MCF 10A (cell line): ENCODE measurements at regions of chr20 and their contacts with region 1.

Region 1: DNA sequence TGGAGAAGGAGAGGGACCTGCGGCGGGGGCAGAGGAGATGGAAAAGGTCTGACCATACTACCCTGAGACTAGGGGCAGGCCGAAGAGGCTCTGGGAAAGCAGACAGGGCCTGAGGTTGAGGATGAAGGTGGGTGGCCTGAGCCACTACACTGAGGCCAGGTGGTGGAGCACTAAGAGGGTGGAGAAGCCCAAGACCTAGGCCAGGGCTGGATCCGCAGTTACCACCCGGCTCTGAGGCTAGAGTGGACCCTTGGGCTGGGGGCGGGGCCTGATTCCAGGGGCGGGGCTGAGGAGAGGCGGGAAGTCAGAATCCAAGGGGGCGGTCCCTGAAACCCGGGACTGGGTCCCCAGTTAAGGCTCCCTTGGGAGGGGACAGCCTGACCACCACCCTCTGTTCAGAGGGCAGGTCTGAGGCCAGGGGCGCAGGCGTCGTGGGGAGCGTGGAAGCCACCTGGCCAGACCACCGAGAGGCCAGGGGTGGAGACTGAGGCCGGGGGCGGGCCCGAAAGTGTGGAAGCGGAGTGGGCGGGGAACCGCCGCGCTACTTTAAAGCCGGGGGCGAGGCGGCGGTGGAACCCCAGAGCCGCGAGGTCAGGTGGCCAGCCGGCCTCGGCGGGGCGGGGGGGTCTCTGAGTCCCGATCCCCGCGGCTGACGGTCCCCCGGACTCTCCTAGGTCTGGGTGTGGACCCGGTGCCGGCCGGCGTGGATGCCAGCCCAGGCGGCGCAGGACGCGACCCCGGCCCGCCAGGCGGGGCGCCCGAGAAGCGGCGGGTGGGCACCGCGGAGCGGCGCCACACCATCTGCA is 8.2 kb downstream of the CCM2L start:
- DNase-seq: peak; percentile 34
- H3K4me3 Mint-ChIP-seq: peak overlapping the region; percentile 75
- H3K27ac Mint-ChIP-seq: no peak overlapping the region
- H3K4me1 Mint-ChIP-seq: no peaks in the 10 kb centered on the region
- H3K27me3 Mint-ChIP-seq: peaks cover 91% of the 10 kb centered on the region
- CTCF ChIP-seq: no peak

Region 2: DNA sequence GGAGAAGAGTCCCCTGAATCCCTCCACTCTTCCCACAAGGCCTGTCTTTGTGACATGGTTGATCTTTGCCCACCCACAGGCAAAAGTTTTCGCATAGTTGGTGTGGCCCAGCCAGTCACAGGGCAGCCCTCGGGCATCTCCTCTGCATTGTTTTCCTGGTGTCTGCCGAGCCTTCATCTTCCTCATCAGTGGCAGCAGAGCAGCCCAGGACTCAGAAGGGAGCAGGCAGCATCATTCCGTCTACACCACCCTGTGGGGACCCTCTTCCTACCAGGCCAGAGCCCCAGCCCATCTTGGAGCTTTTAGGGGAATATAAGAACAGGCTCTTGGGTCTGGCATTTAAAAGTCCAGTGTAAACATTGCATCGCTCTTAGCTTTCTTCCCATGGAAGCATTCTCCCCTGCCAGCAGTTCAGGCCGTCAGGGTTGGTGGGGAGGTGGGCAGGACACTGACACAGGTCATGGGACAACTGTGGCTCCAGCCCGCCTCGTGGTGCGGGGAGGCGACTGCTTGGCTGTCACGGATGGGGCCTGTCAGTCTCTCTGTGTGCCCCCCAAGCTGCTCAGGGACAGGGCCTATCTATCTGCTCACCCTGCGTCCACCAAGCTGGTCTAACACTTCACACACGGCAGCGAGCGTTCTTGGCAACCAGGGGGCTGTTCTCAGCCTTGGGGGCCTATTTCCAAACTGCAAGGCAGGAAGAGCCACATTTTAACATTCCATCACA is 104.9 kb before region 1 on chr20:
- CTCF ChIA-PET with region 1: no interaction called
- POLR2A ChIA-PET with region 1: no interaction called
- intact Hi-C with region 1: no loop called
- DNase-seq: no peak
- H3K4me3 Mint-ChIP-seq: no peak overlapping the region
- H3K27ac Mint-ChIP-seq: no peak overlapping the region
- H3K4me1 Mint-ChIP-seq: no peaks in the 10 kb centered on the region
- H3K27me3 Mint-ChIP-seq: peaks cover 22% of the 10 kb centered on the region
- CTCF ChIP-seq: no peak

Region 3: DNA sequence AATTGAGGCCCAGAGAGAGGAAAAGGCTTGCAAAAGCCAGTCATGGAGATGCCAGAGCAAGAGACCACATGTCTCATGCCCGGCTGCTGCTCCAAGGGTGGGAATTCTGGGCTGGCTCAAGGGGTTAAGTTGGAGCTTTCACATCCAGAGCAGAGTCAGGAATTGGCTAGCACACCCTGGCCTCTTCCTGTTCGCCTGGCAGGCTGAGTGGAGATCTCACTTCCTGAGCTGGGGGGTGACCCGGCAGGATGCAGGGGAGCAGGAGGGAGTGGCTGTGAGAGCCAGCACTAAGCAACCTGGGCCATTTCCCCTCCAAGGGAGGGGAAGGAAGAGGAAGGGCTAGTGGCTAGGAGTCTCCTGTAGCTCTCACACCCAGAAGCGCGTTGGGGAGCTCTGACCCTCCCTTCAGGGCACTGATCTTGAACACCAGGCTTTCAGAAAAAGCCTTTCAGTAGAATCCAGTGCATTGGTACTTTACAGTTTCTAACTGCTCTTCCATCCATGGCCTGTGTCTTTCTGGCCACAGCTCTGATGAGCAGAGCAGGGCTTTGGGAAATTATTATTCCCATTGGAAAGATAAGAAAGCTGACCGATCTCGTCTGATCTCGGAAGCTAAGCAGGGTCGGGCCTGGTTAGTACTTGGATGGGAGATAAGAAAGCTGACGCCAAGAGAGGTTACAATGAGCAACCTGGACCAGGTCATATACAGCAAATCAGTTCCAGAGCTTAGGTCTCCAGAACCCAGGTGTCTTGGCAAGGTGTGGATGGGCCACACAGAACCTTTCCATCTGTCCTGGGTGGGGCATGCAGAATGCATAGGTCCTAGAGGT is 10.5 kb before region 1 on chr20:
- CTCF ChIA-PET with region 1: interaction called, 12 read pairs
- POLR2A ChIA-PET with region 1: interaction called, 3 read pairs
- intact Hi-C with region 1: no loop called
- DNase-seq: no peak
- H3K4me3 Mint-ChIP-seq: no peak overlapping the region
- H3K27ac Mint-ChIP-seq: no peak overlapping the region
- H3K4me1 Mint-ChIP-seq: no peaks in the 10 kb centered on the region
- H3K27me3 Mint-ChIP-seq: peaks cover 31% of the 10 kb centered on the region
- CTCF ChIP-seq: no peak